ENCODE measurements at regions of chr9 and their contacts with region 1.

Region 1: DNA sequence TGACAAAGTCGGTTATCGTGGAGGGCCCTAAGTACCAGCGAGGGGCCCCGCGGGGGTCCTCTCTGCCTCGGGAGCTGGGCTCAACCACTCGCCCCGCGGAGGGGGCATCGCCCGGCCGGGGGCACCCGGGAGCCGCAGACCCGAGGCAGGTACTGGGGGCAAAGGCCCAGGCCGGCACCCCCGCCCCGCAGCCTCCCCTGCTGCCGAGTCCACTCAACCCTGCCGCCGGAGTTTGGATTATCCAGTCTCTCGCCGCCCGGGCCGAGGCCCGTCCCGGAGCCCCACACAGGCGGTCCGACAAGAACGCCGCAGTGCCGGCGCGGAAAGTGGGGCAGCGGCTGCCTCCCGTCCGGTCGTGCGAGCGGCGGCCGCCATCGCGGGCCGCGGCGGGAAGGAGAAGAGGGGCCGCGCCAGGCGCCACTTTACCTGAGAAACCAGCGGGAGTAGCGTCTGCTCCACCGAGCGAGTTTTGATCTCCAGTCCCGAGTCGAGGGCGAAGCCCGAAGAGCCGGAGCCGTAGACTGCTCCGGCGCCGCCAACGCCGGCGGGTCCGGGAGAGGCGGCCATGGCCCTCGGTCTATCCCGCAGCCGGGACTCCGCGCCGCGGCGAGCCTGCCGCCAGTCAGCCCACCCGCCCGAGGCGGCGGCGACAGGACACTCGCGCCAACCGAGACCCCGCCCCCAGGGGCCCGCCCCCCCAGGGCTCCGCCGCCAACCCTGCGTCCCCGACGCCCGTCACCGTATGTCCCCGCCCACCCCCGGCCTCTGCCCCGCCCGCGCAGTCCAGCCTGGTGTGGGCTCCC is at the start of gene CTNNAL1:
- DNase-seq: peak; percentile 92
- H3K4me3 Mint-ChIP-seq: peak within 1 kb of the TSS; percentile 84
- H3K27ac Mint-ChIP-seq: peak within 1 kb of the TSS; percentile 88
- H3K4me1 Mint-ChIP-seq: peaks cover 25% of the 10 kb centered on the region
- H3K27me3 Mint-ChIP-seq: no peaks in the 10 kb centered on the region
- CTCF ChIP-seq: no peak
- total RNA-seq, gene CTNNAL1: 20.6 and 23.7 TPM in 2 replicates

Region 2: DNA sequence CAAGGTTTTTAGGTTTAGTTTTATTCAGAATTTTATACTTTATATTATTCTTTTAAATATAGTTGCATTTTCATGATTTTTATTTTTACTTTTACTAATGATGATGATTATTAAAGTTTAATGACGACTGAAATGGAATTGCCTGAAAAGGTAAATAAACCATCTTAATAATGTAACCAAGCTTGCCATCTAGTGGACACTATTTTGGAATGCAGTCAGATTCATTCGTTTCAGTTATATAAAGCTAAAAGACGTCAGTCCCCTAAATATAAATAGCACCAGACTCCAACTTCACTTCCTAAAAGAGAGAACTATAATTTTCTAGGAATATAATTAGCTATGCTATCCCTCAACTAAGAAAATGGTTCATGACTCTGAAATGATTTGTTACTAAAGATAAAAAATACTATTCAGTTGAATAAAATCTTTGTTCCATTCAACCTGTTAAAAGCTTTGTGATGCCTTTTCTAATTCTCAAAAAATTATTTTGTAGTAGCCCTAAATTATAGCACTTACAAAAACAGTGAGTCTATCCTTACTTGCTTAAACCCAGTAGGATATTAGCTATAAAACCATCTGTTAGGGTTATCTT is 59.0 kb before region 1 on chr9:
- CTCF ChIA-PET with region 1: no interaction called
- intact Hi-C with region 1: loop called (anchors 10 kb)
- DNase-seq: no peak
- H3K4me3 Mint-ChIP-seq: no peak overlapping the region
- H3K27ac Mint-ChIP-seq: no peak overlapping the region
- H3K4me1 Mint-ChIP-seq: no peaks in the 10 kb centered on the region
- H3K27me3 Mint-ChIP-seq: no peaks in the 10 kb centered on the region
- CTCF ChIP-seq: peak; percentile 40